Activated CD8-positive, alpha-beta T cell treated with anti-CD3 and anti-CD28 coated beads for 36 hours (primary cell): ENCODE measurements at regions of chr2 and their contacts with region 1.

Region 1: GRCh38 chr2:102020596-102021181 is 28.9 kb downstream of the IL1R2 start:
- DNase-seq: peak; percentile 90
- ATAC-seq: peak; percentile 100
- H3K4me3 Mint-ChIP-seq: no peak overlapping the region
- H3K27ac Mint-ChIP-seq: no peak overlapping the region
- H3K4me1 Mint-ChIP-seq: peaks cover 9% of the 10 kb centered on the region
- H3K27me3 Mint-ChIP-seq: peaks cover 4% of the 10 kb centered on the region
- CTCF ChIP-seq: peak; percentile 99

Region 2: GRCh38 chr2:101883863-101884262 is 136.8 kb before region 1 on chr2:
- CTCF ChIA-PET with region 1: interaction called, 10 read pairs
- POLR2A ChIA-PET with region 1: no interaction called
- intact Hi-C with region 1: no loop called
- DNase-seq: peak; percentile 48
- ATAC-seq: peak; percentile 97
- H3K4me3 Mint-ChIP-seq: no peak overlapping the region
- H3K27ac Mint-ChIP-seq: no peak overlapping the region
- H3K4me1 Mint-ChIP-seq: peaks cover 7% of the 10 kb centered on the region
- H3K27me3 Mint-ChIP-seq: no peaks in the 10 kb centered on the region
- CTCF ChIP-seq: peak; percentile 58

Region 3: GRCh38 chr2:102033031-102033749 is 12.5 kb after region 1 on chr2:
- CTCF ChIA-PET with region 1: interaction called, 25 read pairs
- POLR2A ChIA-PET with region 1: no interaction called
- intact Hi-C with region 1: no loop called
- DNase-seq: peak; percentile 25
- ATAC-seq: peak; percentile 62
- H3K4me3 Mint-ChIP-seq: no peak overlapping the region
- H3K27ac Mint-ChIP-seq: peak overlapping the region; percentile 47
- H3K4me1 Mint-ChIP-seq: peaks cover 37% of the 10 kb centered on the region
- H3K27me3 Mint-ChIP-seq: no peaks in the 10 kb centered on the region
- CTCF ChIP-seq: no peak

Region 4: DNA sequence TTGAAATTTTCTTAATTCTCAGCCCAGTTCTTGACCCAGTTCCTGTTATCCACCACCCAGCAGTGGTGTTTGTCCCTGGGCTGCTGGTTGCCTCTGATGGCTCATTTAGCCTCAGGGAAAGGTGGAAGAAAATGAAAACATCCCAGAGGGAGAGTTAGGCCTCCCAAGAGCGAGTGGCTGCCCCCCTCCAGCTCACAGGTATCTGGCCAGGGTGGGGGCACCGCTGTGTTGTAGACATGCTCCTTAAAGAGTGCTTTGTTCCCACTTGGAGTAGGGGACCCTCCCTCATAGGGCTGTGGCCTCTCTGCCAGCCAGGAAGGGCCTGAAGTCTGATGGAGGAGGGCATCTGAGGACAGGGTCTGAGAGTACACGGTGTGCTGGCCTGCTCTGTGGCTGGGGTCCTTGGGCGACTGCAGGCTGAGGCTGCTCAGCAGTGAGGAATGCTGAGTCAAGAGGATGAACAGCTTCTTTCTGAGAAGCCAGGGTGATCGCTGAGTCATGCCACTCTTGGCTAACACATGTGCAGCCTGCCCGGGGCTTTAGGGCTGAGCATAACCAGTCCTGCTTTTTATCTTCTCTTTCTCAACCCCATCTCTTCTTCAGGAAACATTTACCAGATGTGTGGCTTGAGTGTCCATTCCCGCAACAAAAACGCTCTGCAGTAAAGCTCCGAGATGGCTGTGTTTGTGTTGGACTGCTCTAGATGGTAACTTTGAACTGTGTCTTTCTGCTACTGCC is 43.4 kb after region 1 on chr2:
- CTCF ChIA-PET with region 1: interaction called, 16 read pairs
- POLR2A ChIA-PET with region 1: no interaction called
- intact Hi-C with region 1: no loop called
- DNase-seq: peak; percentile 57
- ATAC-seq: peak; percentile 9
- H3K4me3 Mint-ChIP-seq: no peak overlapping the region
- H3K27ac Mint-ChIP-seq: peak overlapping the region; percentile 16
- H3K4me1 Mint-ChIP-seq: peaks cover 31% of the 10 kb centered on the region
- H3K27me3 Mint-ChIP-seq: peaks cover 1% of the 10 kb centered on the region
- CTCF ChIP-seq: no peak

Region 5: DNA sequence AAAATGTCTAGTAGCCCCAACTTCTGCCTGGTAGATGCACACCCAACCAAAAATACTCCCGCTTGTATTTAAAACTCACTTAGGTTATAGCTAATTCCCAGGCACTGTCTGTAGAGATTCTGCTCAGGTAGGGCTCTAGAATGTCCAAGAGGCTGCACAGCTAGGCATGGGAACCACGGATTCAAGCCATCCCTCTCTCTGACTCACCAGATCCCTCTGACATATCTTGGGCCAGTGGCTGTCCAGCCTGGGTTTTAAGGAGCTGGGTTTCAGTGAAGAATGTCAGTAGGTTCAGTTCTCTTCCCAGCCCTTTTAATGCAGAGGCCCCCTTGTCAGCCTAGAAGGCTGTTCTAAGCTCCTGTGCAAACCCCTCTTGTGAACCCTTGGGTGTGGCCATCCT is 106.0 kb after region 1 on chr2:
- CTCF ChIA-PET with region 1: interaction called, 10 read pairs
- POLR2A ChIA-PET with region 1: no interaction called
- intact Hi-C with region 1: no loop called
- DNase-seq: no peak
- ATAC-seq: no peak
- H3K4me3 Mint-ChIP-seq: no peak overlapping the region
- H3K27ac Mint-ChIP-seq: no peak overlapping the region
- H3K4me1 Mint-ChIP-seq: peaks cover 11% of the 10 kb centered on the region
- H3K27me3 Mint-ChIP-seq: no peaks in the 10 kb centered on the region
- CTCF ChIP-seq: no peak

Region 6: DNA sequence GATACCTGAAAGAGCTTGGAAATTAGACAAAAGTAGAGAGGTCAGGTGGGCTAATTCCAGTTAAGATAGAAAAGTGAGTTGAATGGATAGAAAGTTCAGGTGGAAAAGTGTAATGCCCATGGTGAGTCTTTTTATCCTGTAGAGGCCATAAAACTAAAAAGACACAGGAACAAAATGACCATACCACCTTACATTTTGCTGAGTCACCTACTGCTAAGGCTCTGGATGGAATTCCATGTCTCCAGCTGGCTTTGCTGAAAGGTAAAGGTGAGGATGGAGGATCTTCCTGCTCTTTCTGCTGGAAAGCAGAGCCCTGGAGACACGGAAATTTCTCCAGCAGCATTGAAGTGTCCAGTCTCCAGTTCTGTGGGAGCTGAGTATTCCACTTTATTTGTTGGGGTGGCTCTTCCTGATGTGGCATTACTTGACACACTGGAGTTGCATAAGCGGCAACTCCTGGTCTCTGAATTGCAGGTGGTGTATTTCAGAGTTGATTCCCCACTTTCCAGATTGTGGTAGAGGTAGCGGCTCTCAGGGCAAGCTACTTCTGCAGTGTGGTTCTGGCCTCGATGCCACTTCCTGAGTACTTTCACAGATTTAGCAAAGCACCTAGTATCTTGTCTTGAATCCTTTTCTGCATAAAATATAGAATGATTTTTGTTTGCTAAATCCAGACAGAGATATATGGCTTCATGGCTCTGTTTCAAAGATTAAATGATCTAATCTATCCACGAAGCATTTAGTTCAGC is 176.9 kb after region 1 on chr2:
- CTCF ChIA-PET with region 1: interaction called, 10 read pairs
- POLR2A ChIA-PET with region 1: no interaction called
- intact Hi-C with region 1: no loop called
- DNase-seq: peak; percentile 5
- ATAC-seq: no peak
- H3K4me3 Mint-ChIP-seq: no peak overlapping the region
- H3K27ac Mint-ChIP-seq: no peak overlapping the region
- H3K4me1 Mint-ChIP-seq: peaks cover 6% of the 10 kb centered on the region
- H3K27me3 Mint-ChIP-seq: peaks cover 4% of the 10 kb centered on the region
- CTCF ChIP-seq: no peak

Region 7: GRCh38 chr2:102442967-102443828 is 422.5 kb after region 1 on chr2:
- CTCF ChIA-PET with region 1: interaction called, 11 read pairs
- POLR2A ChIA-PET with region 1: no interaction called
- intact Hi-C with region 1: loop called (anchors 5 kb)
- DNase-seq: peak; percentile 71
- ATAC-seq: peak; percentile 79
- H3K4me3 Mint-ChIP-seq: no peak overlapping the region
- H3K27ac Mint-ChIP-seq: peak overlapping the region; percentile 37
- H3K4me1 Mint-ChIP-seq: peaks cover 9% of the 10 kb centered on the region
- H3K27me3 Mint-ChIP-seq: no peaks in the 10 kb centered on the region
- CTCF ChIP-seq: peak; percentile 87